ENCODE measurements at regions of chrX and their contacts with region 1.

Region 1: DNA sequence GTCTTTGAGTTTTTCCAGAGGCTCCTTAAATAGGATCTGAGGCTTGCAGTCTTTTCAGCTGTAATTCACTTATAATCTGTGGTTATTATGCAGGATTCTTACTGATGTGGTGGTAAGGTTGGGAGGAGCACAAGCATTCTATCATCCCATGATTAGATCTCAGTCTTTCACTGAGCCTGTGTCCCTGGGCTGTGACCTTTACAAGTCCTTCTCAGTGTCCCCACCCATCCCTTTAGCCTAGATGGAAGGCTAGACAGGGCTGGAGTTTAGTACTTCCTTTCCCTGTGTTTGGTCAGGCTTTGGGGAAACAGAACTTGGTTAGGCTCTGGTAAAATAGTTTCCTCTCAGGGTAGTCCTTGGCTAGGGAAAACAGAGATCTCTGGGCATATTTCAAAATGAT is 17.1 kb upstream of the NKAP start:
- DNase-seq: no peak
- H3K4me3 Mint-ChIP-seq: no peak overlapping the region
- H3K27ac Mint-ChIP-seq: no peak overlapping the region
- H3K4me1 Mint-ChIP-seq: no peaks in the 10 kb centered on the region
- H3K27me3 Mint-ChIP-seq: peaks cover 31% of the 10 kb centered on the region
- CTCF ChIP-seq: no peak

Region 2: DNA sequence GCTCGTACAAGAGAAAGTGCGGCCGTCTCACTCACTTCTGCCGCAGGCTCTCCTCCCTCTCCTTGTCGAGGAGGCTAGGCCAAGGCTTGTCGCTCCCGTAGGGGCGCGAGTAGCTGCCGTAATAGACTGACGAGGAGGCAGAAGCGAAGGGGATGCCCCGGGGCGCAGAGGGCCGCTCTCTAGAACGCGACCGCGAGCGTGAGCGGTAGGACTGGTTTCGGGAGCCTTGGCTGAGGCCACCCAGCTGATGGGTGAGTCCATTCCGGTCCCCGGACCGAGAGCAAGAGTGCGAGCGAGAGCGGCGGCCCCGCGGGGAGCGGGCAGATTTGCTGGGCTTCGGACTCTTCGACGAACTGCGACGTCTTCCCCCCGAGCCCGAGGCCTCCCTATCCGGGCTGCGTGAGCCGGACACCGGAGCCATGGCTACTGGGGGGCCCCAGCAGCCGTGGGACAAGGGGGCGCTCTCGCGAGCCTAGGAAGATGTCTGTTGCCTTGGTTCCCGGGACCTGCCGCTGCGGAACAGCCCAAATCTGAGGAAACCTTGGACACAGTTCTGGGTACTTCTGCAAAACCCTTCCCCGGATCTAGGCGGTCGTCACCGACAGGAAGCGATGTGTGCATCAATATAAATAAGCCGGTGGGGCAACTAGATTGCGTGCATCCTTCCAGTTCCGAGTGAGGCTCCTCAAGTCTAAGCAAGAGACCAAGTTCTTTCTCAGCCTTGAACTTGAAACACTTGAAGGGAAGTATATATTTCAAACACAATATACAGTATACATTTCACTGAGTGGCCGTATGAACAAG is 17.2 kb before region 1 on chrX and contains the start of gene NKAP:
- CTCF ChIA-PET with region 1: interaction called, 10 read pairs
- POLR2A ChIA-PET with region 1: no interaction called
- intact Hi-C with region 1: no loop called
- DNase-seq: peak; percentile 86
- H3K4me3 Mint-ChIP-seq: peak within 1 kb of the TSS; percentile 82
- H3K27ac Mint-ChIP-seq: peak within 1 kb of the TSS; percentile 74
- H3K4me1 Mint-ChIP-seq: no peaks in the 10 kb centered on the region
- H3K27me3 Mint-ChIP-seq: peaks cover 5% of the 10 kb centered on the region
- CTCF ChIP-seq: no peak
- total RNA-seq, gene NKAP: 10.4 and 13.8 TPM in 2 replicates